CD4-positive, alpha-beta memory T cell (primary cell): ENCODE measurements at regions of chr10 and their contacts with region 1.

Region 1: DNA sequence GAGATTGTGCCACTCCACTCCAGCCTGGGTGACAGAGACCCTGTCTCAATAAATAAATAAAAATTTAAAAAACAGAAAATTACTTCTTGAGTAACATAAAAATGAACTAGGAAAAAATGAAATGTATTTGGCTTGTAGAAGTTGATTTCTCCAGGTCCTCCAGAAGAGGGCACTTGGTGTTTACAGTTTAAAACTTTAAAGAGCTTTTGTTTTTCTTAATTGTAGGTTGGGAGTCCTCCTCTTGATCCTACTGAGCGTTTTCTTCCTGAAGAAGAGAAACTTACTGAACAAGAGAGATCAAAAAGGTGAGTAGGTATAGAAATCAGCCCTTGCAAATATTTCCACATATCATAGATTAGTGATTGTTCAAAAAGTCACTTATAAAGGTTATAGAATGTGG is 16.2 kb downstream of the KIFBP start:
- DNase-seq: peak in 4 of 5 donors; percentile 62 to 70 (median 64)
- H3K4me3 ChIP-seq: no peak overlapping the region
- H3K4me3 Mint-ChIP-seq: no peak overlapping the region
- H3K27ac ChIP-seq: no peak overlapping the region
- H3K27ac Mint-ChIP-seq: peak overlapping the region in 1 of 7 donors; percentile 38
- H3K4me1 ChIP-seq: no peaks in the 10 kb centered on the region
- H3K4me1 Mint-ChIP-seq: peaks cover 1 to 5% (median 3%) of the 10 kb centered on the region in 4 donors
- H3K27me3 ChIP-seq: no peaks in the 10 kb centered on the region
- H3K27me3 Mint-ChIP-seq: no peaks in the 10 kb centered on the region

Region 2: DNA sequence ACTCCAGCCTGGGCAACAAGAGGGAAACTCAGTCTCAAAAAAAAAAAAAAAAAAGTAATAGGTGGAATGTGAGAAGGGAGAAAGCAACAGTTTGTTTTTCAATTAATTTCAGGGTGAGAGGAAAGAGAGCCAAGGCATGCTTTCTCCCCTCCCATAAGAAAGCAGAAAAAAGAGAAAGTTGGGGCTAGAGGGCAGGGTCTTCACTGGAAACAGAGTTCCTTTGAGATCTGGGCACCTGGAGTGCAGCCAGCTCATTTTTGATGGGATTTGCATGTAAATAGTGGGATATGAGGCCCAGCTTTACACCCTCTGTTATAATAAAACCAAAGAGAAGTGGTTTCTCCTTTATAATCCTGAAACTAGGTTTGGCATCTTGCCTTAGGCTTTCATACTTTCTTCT is 191.3 kb before region 1 on chr10:
- CTCF ChIA-PET with region 1: no interaction called
- POLR2A ChIA-PET with region 1: no interaction called
- intact Hi-C with region 1: no loop called
- DNase-seq: no peak
- H3K4me3 ChIP-seq: no peak overlapping the region
- H3K4me3 Mint-ChIP-seq: no peak overlapping the region
- H3K27ac ChIP-seq: no peak overlapping the region
- H3K27ac Mint-ChIP-seq: no peak overlapping the region
- H3K4me1 ChIP-seq: no peaks in the 10 kb centered on the region
- H3K4me1 Mint-ChIP-seq: no peaks in the 10 kb centered on the region
- H3K27me3 ChIP-seq: no peaks in the 10 kb centered on the region
- H3K27me3 Mint-ChIP-seq: no peaks in the 10 kb centered on the region

Region 3: DNA sequence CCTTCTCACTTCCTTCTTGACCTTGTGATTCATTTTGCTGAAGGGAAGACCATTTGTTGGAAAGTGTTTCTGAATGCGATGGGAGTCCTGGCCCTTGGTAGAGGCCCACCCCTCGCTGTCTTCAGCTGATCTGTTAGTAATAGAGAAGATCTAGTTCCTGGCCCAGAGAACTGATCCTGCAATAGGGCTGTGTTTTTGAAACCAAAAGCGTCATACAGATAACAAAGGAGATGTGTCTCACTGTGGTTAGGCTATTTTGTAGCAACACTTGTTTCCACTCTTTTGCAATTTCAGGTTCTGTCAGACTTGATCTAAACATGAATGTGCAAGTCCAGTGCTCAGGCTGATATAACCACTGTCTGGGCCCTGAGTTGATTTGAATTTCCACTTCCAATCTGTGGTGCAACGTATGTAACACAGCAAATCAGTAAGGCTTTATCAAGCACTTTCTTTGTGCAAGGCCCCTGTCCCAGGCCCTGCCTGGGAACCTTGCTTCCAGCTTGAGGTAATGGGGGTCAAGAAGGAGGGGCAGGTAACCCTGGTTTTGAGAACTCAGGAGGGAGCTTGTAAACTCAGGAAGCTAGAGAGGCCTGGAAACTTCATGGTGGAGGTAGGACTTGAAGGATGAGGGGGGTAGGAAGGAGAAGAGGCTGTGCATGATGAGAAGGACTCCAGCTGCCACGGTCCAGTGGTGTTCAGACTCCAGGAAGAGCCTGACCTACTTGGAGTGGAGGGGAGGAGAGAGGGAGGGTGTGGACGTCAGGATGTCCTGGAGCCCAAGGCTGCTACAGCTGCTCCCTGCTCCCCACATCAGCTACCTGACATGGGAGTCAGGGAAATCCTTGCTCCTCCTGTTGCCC is 40.9 kb after region 1 on chr10:
- CTCF ChIA-PET with region 1: interaction called, 23 read pairs
- POLR2A ChIA-PET with region 1: interaction called, 7 read pairs
- intact Hi-C with region 1: no loop called
- DNase-seq: peak; percentile 54 to 70 (median 63)
- H3K4me3 ChIP-seq: no peak overlapping the region
- H3K4me3 Mint-ChIP-seq: peak overlapping the region in 7 of 8 donors; percentile 73 to 89 (median 77)
- H3K27ac ChIP-seq: peak overlapping the region; percentile 45
- H3K27ac Mint-ChIP-seq: peak overlapping the region; percentile 93 to 99 (median 97)
- H3K4me1 ChIP-seq: peaks cover 32% of the 10 kb centered on the region
- H3K4me1 Mint-ChIP-seq: peaks cover 19 to 32% (median 27%) of the 10 kb centered on the region in 4 donors
- H3K27me3 ChIP-seq: no peaks in the 10 kb centered on the region
- H3K27me3 Mint-ChIP-seq: no peaks in the 10 kb centered on the region

Region 4: GRCh38 chr10:69101451-69102095 is 96.8 kb after region 1 on chr10:
- CTCF ChIA-PET with region 1: interaction called, 228 read pairs
- POLR2A ChIA-PET with region 1: interaction called, 3 read pairs
- intact Hi-C with region 1: no loop called
- DNase-seq: no peak
- H3K4me3 ChIP-seq: no peak overlapping the region
- H3K4me3 Mint-ChIP-seq: peak overlapping the region in 5 of 8 donors; percentile 15 to 71 (median 35)
- H3K27ac ChIP-seq: no peak overlapping the region
- H3K27ac Mint-ChIP-seq: peak overlapping the region in 6 of 7 donors; percentile 47 to 91 (median 73)
- H3K4me1 ChIP-seq: peaks cover 19% of the 10 kb centered on the region
- H3K4me1 Mint-ChIP-seq: peaks cover 25 to 46% (median 30%) of the 10 kb centered on the region in 4 donors
- H3K27me3 ChIP-seq: no peaks in the 10 kb centered on the region
- H3K27me3 Mint-ChIP-seq: no peaks in the 10 kb centered on the region

Region 5: DNA sequence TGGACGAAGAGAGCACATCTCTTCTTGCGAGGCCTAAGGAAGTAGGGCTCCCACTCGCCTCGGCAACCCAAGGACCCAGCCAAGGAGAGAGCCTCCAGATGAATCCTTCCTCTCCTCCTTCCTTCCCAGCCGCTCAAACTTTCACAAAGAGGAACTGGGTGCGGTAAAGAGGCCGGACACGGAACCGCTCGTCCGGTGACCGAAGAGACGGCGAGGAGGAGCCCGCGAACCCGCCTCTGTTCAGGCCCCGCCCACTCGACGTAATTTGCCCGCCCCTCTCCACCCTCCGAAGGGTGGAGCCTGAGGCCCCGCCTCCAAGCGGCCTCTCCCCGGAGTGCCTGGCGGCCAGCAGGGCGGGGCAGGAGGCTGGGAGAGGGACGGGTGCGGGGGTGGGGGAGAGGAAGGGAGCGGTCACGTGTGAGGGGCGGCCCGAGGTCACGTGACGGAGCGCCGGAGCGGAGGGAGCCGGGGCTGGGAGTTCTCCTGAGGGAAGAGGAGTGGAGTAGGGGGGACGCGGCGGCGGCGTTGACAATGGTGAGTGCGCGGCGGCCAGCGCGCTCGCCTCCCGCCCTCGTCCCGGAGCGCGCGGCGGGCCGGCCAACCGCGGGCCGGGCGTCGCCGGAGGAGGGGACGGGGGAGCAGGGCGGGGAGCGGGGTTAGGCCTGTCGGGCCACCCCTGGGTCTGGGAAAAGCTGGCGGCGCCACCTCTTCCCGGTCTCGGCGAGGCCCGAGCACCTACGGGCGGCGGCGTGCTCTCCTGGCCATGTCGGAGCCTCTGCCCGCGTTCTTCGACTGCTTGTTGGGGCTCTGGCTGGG is 119.1 kb after region 1 on chr10 and contains the start of gene VPS26A:
- CTCF ChIA-PET with region 1: interaction called, 4 read pairs
- POLR2A ChIA-PET with region 1: interaction called, 5 read pairs
- intact Hi-C with region 1: loop called (anchors 1 kb)
- DNase-seq: peak; percentile 98 to 100 (median 98)
- H3K4me3 ChIP-seq: peak within 1 kb of the TSS; percentile 47 to 81
- H3K4me3 Mint-ChIP-seq: peak within 1 kb of the TSS; percentile 92 to 96 (median 94)
- H3K27ac ChIP-seq: peak within 1 kb of the TSS; percentile 96
- H3K27ac Mint-ChIP-seq: peak within 1 kb of the TSS; percentile 96 to 99 (median 98)
- H3K4me1 ChIP-seq: peaks cover 37% of the 10 kb centered on the region
- H3K4me1 Mint-ChIP-seq: peaks cover 13 to 29% (median 21%) of the 10 kb centered on the region in 4 donors
- H3K27me3 ChIP-seq: no peaks in the 10 kb centered on the region
- H3K27me3 Mint-ChIP-seq: no peaks in the 10 kb centered on the region
- total RNA-seq, gene VPS26A: 31.7 to 35.9 TPM

Region 6: DNA sequence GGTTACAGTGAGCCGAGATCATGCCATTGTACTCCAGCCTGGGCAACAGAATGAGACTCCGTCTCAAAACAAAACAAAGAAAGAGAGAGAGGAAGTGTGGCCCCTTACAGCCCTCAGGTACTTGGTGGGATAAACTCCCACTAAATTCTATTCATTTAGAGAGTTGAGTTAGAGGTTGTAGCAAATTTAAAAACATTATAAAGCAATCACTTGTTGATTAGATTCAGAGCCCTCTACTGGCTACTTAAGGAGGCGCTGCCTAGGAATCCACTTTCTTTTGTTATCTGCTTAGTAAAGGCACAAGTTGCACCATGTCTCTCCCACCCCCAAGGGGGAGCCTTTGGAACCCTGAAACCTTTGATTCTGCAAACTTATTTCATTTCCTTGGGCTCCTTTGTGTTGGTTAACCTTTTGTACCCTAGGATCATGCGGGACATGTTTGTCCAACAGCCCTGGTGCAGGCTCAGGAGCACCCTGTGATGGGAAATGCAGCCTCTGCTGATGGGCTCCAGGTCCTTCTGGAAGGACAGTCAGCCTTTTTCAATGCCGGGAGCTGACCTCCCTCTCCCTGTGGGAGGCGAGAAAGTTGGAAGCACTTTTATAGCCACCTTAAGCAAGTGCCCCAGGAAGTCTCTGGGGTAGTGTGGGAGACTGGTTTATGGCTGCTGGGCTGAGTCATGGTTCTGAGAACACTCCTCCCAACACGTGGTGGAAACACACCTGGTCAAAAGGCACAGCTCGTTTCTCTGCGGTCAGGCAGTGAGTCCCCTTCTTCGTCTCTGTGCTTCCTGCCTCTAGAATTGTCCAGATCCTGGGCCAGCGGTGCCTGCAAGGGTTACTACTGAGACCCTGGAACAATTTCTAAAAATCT is 217.6 kb after region 1 on chr10:
- CTCF ChIA-PET with region 1: no interaction called
- POLR2A ChIA-PET with region 1: no interaction called
- intact Hi-C with region 1: loop called (anchors 1 kb)
- DNase-seq: peak; percentile 51 to 87 (median 54)
- H3K4me3 ChIP-seq: peak overlapping the region in 1 of 2 donors; percentile 42
- H3K4me3 Mint-ChIP-seq: peak overlapping the region; percentile 41 to 88 (median 76)
- H3K27ac ChIP-seq: peak overlapping the region; percentile 41
- H3K27ac Mint-ChIP-seq: peak overlapping the region; percentile 9 to 96 (median 78)
- H3K4me1 ChIP-seq: peaks cover 45% of the 10 kb centered on the region
- H3K4me1 Mint-ChIP-seq: peaks cover 18 to 46% (median 33%) of the 10 kb centered on the region in 4 donors
- H3K27me3 ChIP-seq: no peaks in the 10 kb centered on the region
- H3K27me3 Mint-ChIP-seq: no peaks in the 10 kb centered on the region

Region 7: DNA sequence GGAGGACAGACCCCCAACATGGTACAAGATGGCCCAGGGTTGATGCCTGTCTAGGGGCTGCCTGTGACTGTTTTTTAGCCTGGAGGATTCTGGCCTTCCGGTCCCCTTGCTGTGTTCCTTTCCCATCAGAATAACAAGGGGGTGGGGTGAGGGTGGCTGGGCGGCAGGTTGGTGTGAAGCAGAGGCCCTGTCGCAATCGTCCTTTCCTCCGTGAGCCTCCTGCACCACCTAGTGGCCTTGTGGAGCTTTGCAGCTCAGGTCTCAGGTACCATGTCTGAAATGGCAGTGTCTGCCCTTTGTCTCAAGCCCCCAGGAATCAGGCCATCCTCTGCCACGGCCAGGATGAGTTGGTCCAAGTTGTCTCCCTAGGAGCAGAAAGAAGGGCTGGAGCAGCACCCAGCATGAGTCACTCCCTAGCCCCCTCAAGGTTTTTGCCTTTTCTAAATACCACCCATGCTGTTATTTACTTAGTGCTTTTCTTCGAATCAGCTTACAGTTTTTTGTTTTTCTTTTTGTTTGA is 387.7 kb after region 1 on chr10:
- CTCF ChIA-PET with region 1: interaction called, 6 read pairs
- POLR2A ChIA-PET with region 1: no interaction called
- intact Hi-C with region 1: loop called (anchors 2 kb)
- DNase-seq: peak; percentile 79 to 81 (median 80)
- H3K4me3 ChIP-seq: no peak overlapping the region
- H3K4me3 Mint-ChIP-seq: no peak overlapping the region
- H3K27ac ChIP-seq: peak overlapping the region; percentile 22
- H3K27ac Mint-ChIP-seq: peak overlapping the region; percentile 41 to 91 (median 79)
- H3K4me1 ChIP-seq: peaks cover 15% of the 10 kb centered on the region
- H3K4me1 Mint-ChIP-seq: peaks cover 7 to 17% (median 11%) of the 10 kb centered on the region in 4 donors
- H3K27me3 ChIP-seq: no peaks in the 10 kb centered on the region
- H3K27me3 Mint-ChIP-seq: no peaks in the 10 kb centered on the region